ENCODE measurements at regions of chr16 and their contacts with region 1.

Region 1: DNA sequence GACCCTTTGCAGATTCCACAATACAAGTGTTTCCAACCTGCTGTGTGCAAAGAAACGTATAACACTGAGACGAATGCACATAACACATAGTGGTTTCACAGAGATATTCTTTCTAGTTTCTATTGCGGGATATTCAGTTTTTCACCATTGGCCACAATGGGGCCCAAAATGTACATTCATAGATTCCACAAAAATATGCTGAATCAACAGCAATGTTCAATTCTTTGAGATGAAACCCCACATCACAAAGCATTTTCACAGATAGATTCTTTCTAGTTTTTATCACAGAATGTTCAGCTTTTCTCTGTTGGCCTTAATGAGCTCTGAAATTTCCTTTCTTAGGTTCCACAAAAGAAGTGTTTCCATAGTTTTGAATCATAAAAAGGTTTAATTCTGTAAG is 2472.3 kb downstream of the TP53TG3F start:
- DNase-seq: no peak
- ATAC-seq: no peak
- H3K4me3 ChIP-seq: no peak overlapping the region
- H3K27ac ChIP-seq: no peak overlapping the region
- H3K4me1 ChIP-seq: no peaks in the 10 kb centered on the region
- H3K27me3 ChIP-seq: no peaks in the 10 kb centered on the region
- CTCF ChIP-seq: no peak

Region 2: GRCh38 chr16:35862242-35862641 is 69.5 kb before region 1 on chr16:
- intact Hi-C with region 1: no loop called
- DNase-seq: no peak
- ATAC-seq: no peak
- H3K4me3 ChIP-seq: no peak overlapping the region
- H3K27ac ChIP-seq: no peak overlapping the region
- H3K4me1 ChIP-seq: no peaks in the 10 kb centered on the region
- H3K27me3 ChIP-seq: no peaks in the 10 kb centered on the region
- CTCF ChIP-seq: no peak

Region 3: GRCh38 chr16:35873472-35873871 is 58.2 kb before region 1 on chr16:
- intact Hi-C with region 1: loop called in 1 of 10 experiments (anchors 10 kb)
- DNase-seq: no peak
- ATAC-seq: no peak
- H3K4me3 ChIP-seq: no peak overlapping the region
- H3K27ac ChIP-seq: no peak overlapping the region
- H3K4me1 ChIP-seq: no peaks in the 10 kb centered on the region
- H3K27me3 ChIP-seq: no peaks in the 10 kb centered on the region
- CTCF ChIP-seq: no peak

Measured in heart right ventricle (tissue), 16 donors.